ENCODE measurements at regions of chr7 and their contacts with region 1.

Region 1: DNA sequence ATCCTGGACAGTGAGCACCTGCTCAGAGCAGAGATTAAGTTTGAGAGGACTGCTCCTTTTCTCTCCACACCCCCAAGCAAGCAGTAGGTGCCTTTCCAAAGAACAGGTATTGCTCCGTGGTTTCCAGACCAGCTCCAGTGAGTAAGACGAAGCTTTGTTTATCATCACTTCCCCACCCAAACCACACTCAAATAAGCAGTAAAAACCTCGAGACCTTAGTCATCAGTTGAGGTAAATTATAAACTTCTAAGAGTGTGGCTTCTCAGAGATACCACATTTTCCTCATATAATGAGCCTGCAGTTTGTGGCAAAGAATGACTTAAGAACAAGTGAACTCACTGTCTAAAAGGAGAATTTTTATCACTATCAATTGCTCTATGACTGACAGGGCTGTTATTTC is 50.0 kb upstream of the GRB10 start:
- DNase-seq: peak; percentile 54
- ATAC-seq: peak; percentile 94
- H3K4me3 Mint-ChIP-seq: no peak overlapping the region
- H3K27ac Mint-ChIP-seq: peak overlapping the region; percentile 7
- H3K4me1 Mint-ChIP-seq: peaks cover 18% of the 10 kb centered on the region
- H3K27me3 Mint-ChIP-seq: peaks cover 34% of the 10 kb centered on the region

Region 2: GRCh38 chr7:50664461-50664922 is 168.3 kb before region 1 on chr7:
- CTCF ChIA-PET with region 1: no interaction called
- POLR2A ChIA-PET with region 1: no interaction called
- intact Hi-C with region 1: loop called (anchors 2 to 5 kb)
- DNase-seq: peak; percentile 47
- ATAC-seq: peak; percentile 69
- H3K4me3 Mint-ChIP-seq: no peak overlapping the region
- H3K27ac Mint-ChIP-seq: no peak overlapping the region
- H3K4me1 Mint-ChIP-seq: peaks cover 59% of the 10 kb centered on the region
- H3K27me3 Mint-ChIP-seq: peaks cover 2% of the 10 kb centered on the region

Region 3: GRCh38 chr7:50821457-50821979 is 11.2 kb before region 1 on chr7:
- CTCF ChIA-PET with region 1: no interaction called
- POLR2A ChIA-PET with region 1: no interaction called
- intact Hi-C with region 1: no loop called
- DNase-seq: no peak
- ATAC-seq: no peak
- H3K4me3 Mint-ChIP-seq: no peak overlapping the region
- H3K27ac Mint-ChIP-seq: no peak overlapping the region
- H3K4me1 Mint-ChIP-seq: peaks cover 1% of the 10 kb centered on the region
- H3K27me3 Mint-ChIP-seq: peaks cover 2% of the 10 kb centered on the region

Region 4: GRCh38 chr7:51187941-51188340 is 355.2 kb after region 1 on chr7:
- CTCF ChIA-PET with region 1: no interaction called
- POLR2A ChIA-PET with region 1: no interaction called
- intact Hi-C with region 1: no loop called
- DNase-seq: no peak
- ATAC-seq: no peak
- H3K4me3 Mint-ChIP-seq: no peak overlapping the region
- H3K27ac Mint-ChIP-seq: no peak overlapping the region
- H3K4me1 Mint-ChIP-seq: no peaks in the 10 kb centered on the region
- H3K27me3 Mint-ChIP-seq: no peaks in the 10 kb centered on the region

Measured in activated CD4-positive, alpha-beta T cell treated with anti-CD3 and anti-CD28 coated beads for 36 hours (primary cell).